HAP-1 (cell line): ENCODE measurements at regions of chr7 and their contacts with region 1.

Region 1: DNA sequence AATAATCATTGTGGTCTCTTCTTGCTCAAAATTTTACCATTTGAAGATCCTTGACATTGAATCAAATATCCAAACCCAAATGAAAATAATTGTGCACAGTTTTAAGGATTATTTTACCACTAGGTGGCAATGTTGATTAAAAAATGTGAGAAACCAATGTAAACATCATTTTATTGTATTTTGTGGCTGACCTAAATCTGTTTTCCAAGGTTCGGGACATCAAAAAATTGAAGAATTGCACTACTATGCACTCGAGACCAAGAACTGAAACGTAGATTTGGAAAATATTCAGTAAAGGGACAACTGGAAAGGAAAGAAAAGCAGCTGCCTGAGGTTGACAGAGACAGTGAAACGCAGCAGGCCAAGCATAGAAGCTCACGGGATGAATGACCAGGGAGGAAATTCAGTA is 259.3 kb downstream of the SNX13 start:
- DNase-seq: peak in 1 of 2 experiments; percentile 33
- H3K4me3 ChIP-seq: no peak overlapping the region
- H3K4me1 ChIP-seq: no peaks in the 10 kb centered on the region
- H3K27me3 ChIP-seq: peaks cover 5% of the 10 kb centered on the region; the same call in 1 of the 2 replicates

Region 2: GRCh38 chr7:18020138-18020715 is 339.3 kb after region 1 on chr7:
- in situ Hi-C with region 1: no loop called
- DNase-seq: no peak
- H3K4me3 ChIP-seq: no peak overlapping the region
- H3K4me1 ChIP-seq: no peaks in the 10 kb centered on the region
- H3K27me3 ChIP-seq: no peaks in the 10 kb centered on the region

Region 3: DNA sequence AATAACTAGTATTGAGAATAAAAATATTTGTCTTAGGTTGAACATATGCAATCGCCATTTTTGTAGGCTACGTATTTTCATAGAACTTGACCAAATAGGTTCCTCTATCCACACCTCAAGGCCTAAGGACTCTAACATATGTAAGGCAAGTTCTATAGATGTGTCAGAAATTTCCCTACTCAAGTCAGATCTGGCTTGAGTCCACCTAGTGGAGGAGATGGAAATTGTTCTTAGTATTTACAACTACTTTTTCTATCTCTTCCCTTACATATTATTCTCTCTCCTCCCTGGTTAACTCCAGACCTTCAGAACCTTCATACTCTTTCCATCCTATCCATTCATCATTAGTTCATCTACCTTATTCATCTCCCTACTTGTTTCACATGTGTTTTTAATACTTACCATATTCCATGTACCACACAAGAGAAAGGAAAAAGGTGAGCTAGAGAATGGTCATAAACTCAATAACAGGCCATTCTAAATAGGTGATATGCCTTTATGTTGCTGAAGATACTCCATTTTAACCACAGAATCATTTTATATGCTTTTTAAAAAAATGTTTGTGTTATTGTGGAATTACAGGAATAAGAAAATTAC is 640.1 kb after region 1 on chr7:
- in situ Hi-C with region 1: loop called (anchors 10 kb)
- DNase-seq: peak; percentile 12 to 78
- H3K4me3 ChIP-seq: no peak overlapping the region
- H3K4me1 ChIP-seq: no peaks in the 10 kb centered on the region
- H3K27me3 ChIP-seq: no peaks in the 10 kb centered on the region